ENCODE measurements at regions of chr20 and their contacts with region 1.

Region 1: GRCh38 chr20:48986899-48987298 is 59.2 kb upstream of the CSE1L start:
- DNase-seq: no peak
- ATAC-seq: no peak
- H3K4me3 ChIP-seq: no peak overlapping the region
- H3K27ac ChIP-seq: no peak overlapping the region
- H3K4me1 ChIP-seq: peaks cover 6% of the 10 kb centered on the region
- H3K27me3 ChIP-seq: no peaks in the 10 kb centered on the region
- CTCF ChIP-seq: peak; percentile 21
- POLR2A ChIP-seq: no peak
- RAD21 ChIP-seq: 0 out of 2 replicates have a peak, but pooled peaks have one; percentile 4

Region 2: GRCh38 chr20:48283305-48284080 is 703.4 kb before region 1 on chr20:
- CTCF ChIA-PET with region 1: no interaction called
- POLR2A ChIA-PET with region 1: no interaction called
- dilution Hi-C with region 1: no loop called
- in situ Hi-C with region 1: no loop called
- intact Hi-C with region 1: no loop called
- DNase-seq: peak; percentile 93
- ATAC-seq: peak; percentile 60; the same call in 1 of the 2 replicates
- H3K4me3 ChIP-seq: no peak overlapping the region
- H3K27ac ChIP-seq: no peak overlapping the region
- H3K4me1 ChIP-seq: peaks cover 4% of the 10 kb centered on the region
- H3K27me3 ChIP-seq: no peaks in the 10 kb centered on the region; the same call in 1 of the 2 replicates
- CTCF ChIP-seq: no peak
- POLR2A ChIP-seq: no peak
- RAD21 ChIP-seq: no peak

Region 3: GRCh38 chr20:48722737-48723191 is 264.1 kb before region 1 on chr20:
- CTCF ChIA-PET with region 1: no interaction called
- POLR2A ChIA-PET with region 1: no interaction called
- dilution Hi-C with region 1: no loop called
- in situ Hi-C with region 1: no loop called
- intact Hi-C with region 1: no loop called
- DNase-seq: no peak
- ATAC-seq: no peak; the same call in 1 of the 2 replicates
- H3K4me3 ChIP-seq: no peak overlapping the region
- H3K27ac ChIP-seq: no peak overlapping the region
- H3K4me1 ChIP-seq: peaks cover 3% of the 10 kb centered on the region; the same call in 1 of the 2 replicates
- H3K27me3 ChIP-seq: peaks cover 2% of the 10 kb centered on the region; the same call in 1 of the 2 replicates
- CTCF ChIP-seq: no peak
- POLR2A ChIP-seq: no peak
- RAD21 ChIP-seq: no peak

Region 4: GRCh38 chr20:49006446-49006980 is 19.6 kb after region 1 on chr20:
- CTCF ChIA-PET with region 1: no interaction called
- POLR2A ChIA-PET with region 1: interaction called, 14 read pairs
- dilution Hi-C with region 1: no loop called
- in situ Hi-C with region 1: no loop called
- intact Hi-C with region 1: no loop called
- DNase-seq: no peak
- ATAC-seq: no peak
- H3K4me3 ChIP-seq: no peak overlapping the region
- H3K27ac ChIP-seq: no peak overlapping the region
- H3K4me1 ChIP-seq: no peaks in the 10 kb centered on the region
- H3K27me3 ChIP-seq: no peaks in the 10 kb centered on the region
- CTCF ChIP-seq: no peak
- POLR2A ChIP-seq: no peak
- RAD21 ChIP-seq: no peak

Measured in IMR-90 (cell line).